A673 (cell line): ENCODE measurements at regions of chr5 and their contacts with region 1.

Region 1: GRCh38 chr5:21810737-21811316 is 1042.3 kb downstream of the CDH12 start:
- DNase-seq: peak; percentile 77
- H3K4me3 ChIP-seq: peak overlapping the region; percentile 21
- H3K27ac ChIP-seq: peak overlapping the region; percentile 32
- H3K4me1 ChIP-seq: peaks cover 59% of the 10 kb centered on the region
- H3K27me3 ChIP-seq: no peaks in the 10 kb centered on the region
- CTCF ChIP-seq: peak; percentile 66

Region 2: GRCh38 chr5:21199087-21199486 is 611.7 kb before region 1 on chr5:
- CTCF ChIA-PET with region 1: no interaction called
- POLR2A ChIA-PET with region 1: no interaction called
- intact Hi-C with region 1: no loop called
- DNase-seq: no peak
- H3K4me3 ChIP-seq: no peak overlapping the region
- H3K27ac ChIP-seq: no peak overlapping the region
- H3K4me1 ChIP-seq: peaks cover 13% of the 10 kb centered on the region
- H3K27me3 ChIP-seq: no peaks in the 10 kb centered on the region
- CTCF ChIP-seq: no peak

Region 3: DNA sequence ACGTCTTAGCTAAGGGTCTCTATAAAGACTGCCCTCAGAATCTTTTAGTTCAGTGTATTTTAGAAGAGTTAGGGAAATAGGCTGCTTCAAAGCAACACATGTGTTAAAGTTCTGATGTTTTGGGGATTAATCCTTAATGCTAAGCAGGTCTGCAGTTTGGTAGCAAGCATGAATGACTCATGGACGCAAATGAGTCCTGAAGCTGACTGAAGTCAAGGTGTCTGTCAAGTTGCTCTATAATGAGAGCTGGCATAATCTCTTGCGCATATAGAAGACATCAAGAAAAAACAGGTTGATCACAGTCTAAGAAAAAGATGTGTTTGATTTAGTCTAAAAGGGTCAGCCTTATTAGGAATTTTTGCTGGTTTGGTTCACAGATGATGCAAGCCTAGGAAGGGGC is 412.3 kb after region 1 on chr5:
- CTCF ChIA-PET with region 1: no interaction called
- POLR2A ChIA-PET with region 1: no interaction called
- intact Hi-C with region 1: loop called (anchors 5 kb)
- DNase-seq: no peak
- H3K4me3 ChIP-seq: no peak overlapping the region
- H3K27ac ChIP-seq: no peak overlapping the region
- H3K4me1 ChIP-seq: no peaks in the 10 kb centered on the region
- H3K27me3 ChIP-seq: no peaks in the 10 kb centered on the region
- CTCF ChIP-seq: no peak

Region 4: DNA sequence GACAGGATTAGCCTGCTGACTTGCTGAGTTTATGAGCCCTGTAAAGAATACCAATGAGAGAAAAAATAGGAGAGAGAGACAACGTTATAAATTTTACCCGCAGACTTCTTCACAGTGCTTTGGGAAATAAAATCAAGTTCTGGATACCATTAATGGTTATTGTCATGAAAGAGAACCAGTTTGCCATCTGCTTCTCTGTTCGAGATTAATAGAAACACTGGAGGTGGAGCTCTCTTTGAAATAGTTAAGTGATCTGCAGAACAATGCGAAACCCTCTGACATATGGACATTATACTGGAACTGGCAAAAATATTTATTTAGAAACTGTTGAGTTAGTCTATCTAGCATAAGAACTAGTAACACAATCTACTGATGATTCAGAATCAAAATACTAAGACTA is 541.7 kb after region 1 on chr5:
- CTCF ChIA-PET with region 1: no interaction called
- POLR2A ChIA-PET with region 1: no interaction called
- intact Hi-C with region 1: loop called (anchors 10 kb)
- DNase-seq: no peak
- H3K4me3 ChIP-seq: no peak overlapping the region
- H3K27ac ChIP-seq: no peak overlapping the region
- H3K4me1 ChIP-seq: no peaks in the 10 kb centered on the region
- H3K27me3 ChIP-seq: no peaks in the 10 kb centered on the region
- CTCF ChIP-seq: no peak

Region 5: DNA sequence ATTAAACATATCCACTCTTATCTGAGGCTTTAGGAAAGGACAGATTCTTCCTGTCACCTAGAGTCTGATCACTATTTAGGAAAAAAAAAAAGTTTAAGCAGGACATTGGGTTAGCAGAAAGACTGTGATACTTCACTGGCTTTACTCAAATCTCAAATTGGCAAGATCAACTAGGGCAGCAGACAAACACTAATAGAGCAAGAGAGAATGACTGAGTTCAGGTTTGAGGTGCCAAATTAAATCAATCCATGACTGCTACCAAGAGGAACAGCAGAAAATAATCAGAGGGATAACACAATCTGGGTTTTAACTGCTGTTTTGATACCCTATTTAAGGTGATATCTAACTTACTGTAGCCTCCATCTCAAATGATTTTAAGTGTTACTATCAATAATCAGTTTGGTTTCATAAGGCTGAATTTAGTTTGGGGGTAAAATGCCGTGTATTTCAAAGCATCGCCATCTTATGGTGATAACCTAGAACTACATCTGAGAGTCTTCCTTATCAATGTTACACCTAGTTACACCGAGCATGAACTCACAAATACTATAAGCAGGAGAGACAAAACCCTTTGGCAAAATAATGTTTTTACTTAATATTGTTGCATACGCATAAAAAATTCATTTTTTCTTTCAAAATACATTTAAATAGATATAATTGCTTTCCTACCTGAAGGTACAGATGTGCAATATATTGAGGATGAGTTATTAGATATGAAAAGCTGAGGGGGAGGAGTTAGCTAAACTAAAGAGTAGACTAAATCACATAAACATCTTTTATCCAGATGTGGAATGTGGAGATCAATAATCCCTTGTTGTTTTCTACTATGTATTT is 1328.7 kb after region 1 on chr5:
- CTCF ChIA-PET with region 1: no interaction called
- POLR2A ChIA-PET with region 1: no interaction called
- intact Hi-C with region 1: loop called (anchors 5 kb)
- DNase-seq: peak; percentile 33
- H3K4me3 ChIP-seq: no peak overlapping the region
- H3K27ac ChIP-seq: no peak overlapping the region
- H3K4me1 ChIP-seq: no peaks in the 10 kb centered on the region
- H3K27me3 ChIP-seq: no peaks in the 10 kb centered on the region
- CTCF ChIP-seq: peak; percentile 63